Dendritic cell treated with granulocyte-macrophage colony-stimulating factor and Interleukin-4, amounts not matched to agents 40 ng/mL and 50 ng/mL, for 4 days (primary cell): ENCODE measurements at regions of chr9 and their contacts with region 1.

Region 1: GRCh38 chr9:25350011-25350410 is 328.2 kb downstream of the TUSC1 start:
- H3K4me3 Mint-ChIP-seq: no peak overlapping the region
- H3K27ac Mint-ChIP-seq: no peak overlapping the region
- H3K4me1 Mint-ChIP-seq: no peaks in the 10 kb centered on the region
- H3K27me3 Mint-ChIP-seq: no peaks in the 10 kb centered on the region

Region 2: DNA sequence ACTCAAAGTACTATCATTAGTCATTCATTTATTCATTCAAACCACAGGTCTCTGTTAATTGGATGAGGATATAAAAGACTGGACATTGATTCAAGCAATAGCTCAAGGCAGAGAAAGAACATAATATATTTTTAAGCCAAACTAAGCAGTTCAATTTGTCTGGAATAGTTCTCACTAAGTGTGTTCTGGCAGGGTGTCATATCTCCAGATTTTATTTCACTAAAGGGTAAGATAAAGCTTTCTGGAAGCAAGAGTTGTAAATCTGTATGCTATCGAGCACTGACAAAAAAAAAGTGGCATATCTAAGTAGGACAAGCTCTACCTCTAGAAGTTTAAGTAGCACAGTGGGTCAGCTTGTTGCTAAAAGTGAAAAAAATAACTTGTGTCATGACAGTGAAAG is 47.4 kb before region 1 on chr9:
- intact Hi-C with region 1: loop called (anchors 5 kb)
- H3K4me3 Mint-ChIP-seq: no peak overlapping the region
- H3K27ac Mint-ChIP-seq: no peak overlapping the region
- H3K4me1 Mint-ChIP-seq: no peaks in the 10 kb centered on the region
- H3K27me3 Mint-ChIP-seq: no peaks in the 10 kb centered on the region